ENCODE measurements at regions of chr14 and their contacts with region 1.

Region 1: GRCh38 chr14:54366736-54367735 is 29.8 kb upstream of the CDKN3 start:
- DNase-seq: peak; percentile 38
- H3K4me3 ChIP-seq: no peak overlapping the region; the same call in 1 of the 2 replicates
- CTCF ChIP-seq: peak; percentile 83

Region 2: GRCh38 chr14:53742233-53742620 is 624.8 kb before region 1 on chr14:
- CTCF ChIA-PET with region 1: no interaction called
- POLR2A ChIA-PET with region 1: no interaction called
- DNase-seq: no peak
- H3K4me3 ChIP-seq: no peak overlapping the region
- CTCF ChIP-seq: no peak

Region 3: DNA sequence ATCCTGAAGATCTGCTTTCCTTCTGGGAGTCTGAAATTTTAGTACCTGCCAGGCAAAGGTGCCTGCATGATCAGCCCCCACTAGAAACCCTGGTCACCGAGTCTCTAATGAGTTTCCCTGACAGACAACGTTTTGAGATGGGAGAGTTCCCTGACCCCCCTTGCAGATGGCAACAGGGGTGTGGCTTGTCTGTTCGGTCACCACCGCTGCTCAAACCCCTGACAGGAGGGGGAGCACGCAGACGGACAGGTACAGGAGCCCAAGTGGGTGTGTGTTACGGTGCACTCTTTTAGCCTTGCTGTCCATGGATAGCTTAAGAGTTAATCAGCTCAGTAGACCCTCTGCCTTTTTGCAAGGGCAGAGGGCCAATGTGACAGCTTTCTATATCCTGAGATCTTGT is 10.5 kb after region 1 on chr14:
- CTCF ChIA-PET with region 1: interaction called, 28 read pairs
- POLR2A ChIA-PET with region 1: no interaction called
- DNase-seq: no peak
- H3K4me3 ChIP-seq: no peak overlapping the region
- CTCF ChIP-seq: no peak

Region 4: GRCh38 chr14:54396493-54397335 is 29.7 kb after region 1 on chr14 and contains the start of gene CDKN3:
- CTCF ChIA-PET with region 1: interaction called, 23 read pairs
- POLR2A ChIA-PET with region 1: no interaction called
- DNase-seq: peak; percentile 96
- H3K4me3 ChIP-seq: peak within 1 kb of the TSS; percentile 85
- CTCF ChIP-seq: peak; percentile 60

Region 5: GRCh38 chr14:54420013-54420809 is 53.2 kb after region 1 on chr14:
- CTCF ChIA-PET with region 1: interaction called, 13 read pairs
- POLR2A ChIA-PET with region 1: interaction called, 4 read pairs
- DNase-seq: no peak
- H3K4me3 ChIP-seq: no peak overlapping the region
- CTCF ChIP-seq: peak; percentile 67

Region 6: GRCh38 chr14:54805521-54806322 is 438.7 kb after region 1 on chr14:
- CTCF ChIA-PET with region 1: interaction called, 15 read pairs
- POLR2A ChIA-PET with region 1: no interaction called
- DNase-seq: peak; percentile 5
- H3K4me3 ChIP-seq: no peak overlapping the region; the same call in 1 of the 2 replicates
- CTCF ChIP-seq: peak; percentile 92

Measured in AG04449 (cell line).